ENCODE measurements at regions of chr7 and their contacts with region 1.

Region 1: DNA sequence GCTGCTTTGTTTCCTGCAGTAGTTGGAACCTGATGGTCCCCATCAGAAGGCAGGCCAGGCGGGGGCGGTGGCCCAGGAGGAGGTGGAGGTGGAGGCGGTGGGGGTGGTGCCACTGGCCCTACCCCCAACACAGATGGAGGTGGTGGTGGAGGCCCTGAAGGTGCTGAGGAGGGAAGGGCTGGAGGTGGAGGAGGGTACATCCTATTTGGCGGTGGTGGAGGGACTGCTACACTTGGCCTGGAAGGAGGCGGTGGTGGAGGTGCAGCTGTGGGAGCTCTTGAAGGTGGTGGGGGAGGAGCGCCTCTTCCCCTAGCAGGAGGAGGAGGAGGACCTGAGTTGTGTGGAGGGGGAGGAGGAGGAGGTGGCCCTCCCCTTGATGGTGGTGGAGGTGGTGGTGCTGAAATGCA is 36.8 kb downstream of the LMOD2 start:
- DNase-seq: no peak
- H3K4me3 ChIP-seq: no peak overlapping the region
- H3K4me3 Mint-ChIP-seq: no peak overlapping the region
- H3K27ac ChIP-seq: no peak overlapping the region
- H3K27ac Mint-ChIP-seq: peak overlapping the region in 1 of 7 donors; percentile 42
- H3K4me1 ChIP-seq: no peaks in the 10 kb centered on the region
- H3K4me1 Mint-ChIP-seq: no peaks in the 10 kb centered on the region
- H3K27me3 ChIP-seq: no peaks in the 10 kb centered on the region
- H3K27me3 Mint-ChIP-seq: no peaks in the 10 kb centered on the region

Region 2: DNA sequence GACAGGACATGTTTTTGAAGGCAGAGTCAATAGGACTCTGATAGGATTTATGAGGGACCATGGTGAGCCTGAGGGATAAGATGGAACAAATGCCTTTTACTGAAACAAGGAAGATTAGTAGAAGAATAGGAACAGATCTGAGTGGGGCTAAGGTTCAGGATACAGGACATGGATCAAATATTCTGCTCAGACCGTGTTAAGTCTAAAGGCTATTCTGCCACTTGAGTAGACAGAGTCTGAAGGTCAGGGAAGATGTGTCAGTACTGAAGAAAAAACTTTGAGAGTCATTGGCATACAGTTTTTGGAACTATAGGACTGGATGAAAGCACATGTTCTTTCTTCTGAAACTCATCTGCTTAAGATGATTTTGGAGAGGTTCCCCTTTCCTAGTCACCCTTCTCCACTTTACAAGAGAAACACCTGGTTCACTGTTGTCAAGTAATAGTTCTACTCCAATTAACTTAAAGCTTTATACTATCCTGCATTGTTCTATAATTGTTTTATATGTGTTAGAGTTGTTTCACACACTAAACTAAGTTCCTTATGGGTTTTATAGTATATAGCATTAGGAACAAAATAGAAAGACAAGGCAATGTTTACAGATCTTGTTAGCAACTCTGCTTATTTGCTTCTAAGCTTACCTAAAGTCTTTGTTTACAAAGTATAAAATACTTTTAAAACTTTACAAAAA is 12.9 kb after region 1 on chr7:
- CTCF ChIA-PET with region 1: interaction called, 17 read pairs
- POLR2A ChIA-PET with region 1: no interaction called
- intact Hi-C with region 1: no loop called
- DNase-seq: no peak
- H3K4me3 ChIP-seq: no peak overlapping the region
- H3K4me3 Mint-ChIP-seq: no peak overlapping the region
- H3K27ac ChIP-seq: no peak overlapping the region
- H3K27ac Mint-ChIP-seq: peak overlapping the region in 5 of 7 donors; percentile 5 to 87 (median 32)
- H3K4me1 ChIP-seq: peaks cover 6% of the 10 kb centered on the region
- H3K4me1 Mint-ChIP-seq: peaks cover 0 to 9% (median 3%) of the 10 kb centered on the region in 4 donors
- H3K27me3 ChIP-seq: no peaks in the 10 kb centered on the region
- H3K27me3 Mint-ChIP-seq: no peaks in the 10 kb centered on the region

Measured in CD4-positive, alpha-beta memory T cell (primary cell).